ENCODE measurements at regions of chr10 and their contacts with region 1.

Region 1: DNA sequence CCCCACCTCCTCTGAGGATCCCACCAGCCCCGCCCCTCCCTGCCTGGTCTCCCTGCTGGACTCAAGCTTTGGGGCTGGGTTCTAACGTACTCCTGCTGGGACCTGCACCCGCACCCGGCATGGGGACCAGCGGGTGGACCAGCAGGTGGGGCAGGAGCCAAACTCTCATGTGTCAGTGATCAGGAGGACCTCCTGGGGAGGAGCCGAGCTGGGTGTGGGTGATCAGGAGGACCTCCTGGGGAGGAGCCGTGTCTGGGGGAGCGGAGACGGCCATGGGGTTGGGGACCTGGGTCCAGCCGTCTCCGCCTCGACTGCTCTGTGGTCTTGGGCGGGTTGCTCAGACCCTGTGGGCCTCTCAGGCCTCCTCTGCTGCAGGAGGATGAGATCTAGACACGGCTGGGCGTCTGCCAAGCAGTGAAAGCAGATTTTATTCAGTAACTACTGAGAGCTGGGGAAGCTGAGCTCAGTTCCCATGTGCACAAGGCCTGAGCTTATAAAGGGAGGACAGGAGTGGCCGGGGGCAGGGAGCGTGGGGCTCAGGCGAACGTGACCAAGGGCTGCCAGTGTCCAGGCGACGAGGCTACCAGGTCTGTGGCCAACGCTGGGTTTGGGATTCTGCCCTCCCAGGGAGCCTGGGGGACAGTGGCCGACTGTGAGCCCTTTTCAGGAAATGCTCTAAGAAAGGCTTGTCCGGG is 33.6 kb upstream of the UTF1 start:
- DNase-seq: no peak
- ATAC-seq: no peak
- H3K4me3 Mint-ChIP-seq: no peak overlapping the region
- H3K27ac Mint-ChIP-seq: peak overlapping the region; percentile 94
- H3K4me1 Mint-ChIP-seq: no peaks in the 10 kb centered on the region
- H3K27me3 Mint-ChIP-seq: peaks cover 12% of the 10 kb centered on the region
- CTCF ChIP-seq: no peak

Region 2: DNA sequence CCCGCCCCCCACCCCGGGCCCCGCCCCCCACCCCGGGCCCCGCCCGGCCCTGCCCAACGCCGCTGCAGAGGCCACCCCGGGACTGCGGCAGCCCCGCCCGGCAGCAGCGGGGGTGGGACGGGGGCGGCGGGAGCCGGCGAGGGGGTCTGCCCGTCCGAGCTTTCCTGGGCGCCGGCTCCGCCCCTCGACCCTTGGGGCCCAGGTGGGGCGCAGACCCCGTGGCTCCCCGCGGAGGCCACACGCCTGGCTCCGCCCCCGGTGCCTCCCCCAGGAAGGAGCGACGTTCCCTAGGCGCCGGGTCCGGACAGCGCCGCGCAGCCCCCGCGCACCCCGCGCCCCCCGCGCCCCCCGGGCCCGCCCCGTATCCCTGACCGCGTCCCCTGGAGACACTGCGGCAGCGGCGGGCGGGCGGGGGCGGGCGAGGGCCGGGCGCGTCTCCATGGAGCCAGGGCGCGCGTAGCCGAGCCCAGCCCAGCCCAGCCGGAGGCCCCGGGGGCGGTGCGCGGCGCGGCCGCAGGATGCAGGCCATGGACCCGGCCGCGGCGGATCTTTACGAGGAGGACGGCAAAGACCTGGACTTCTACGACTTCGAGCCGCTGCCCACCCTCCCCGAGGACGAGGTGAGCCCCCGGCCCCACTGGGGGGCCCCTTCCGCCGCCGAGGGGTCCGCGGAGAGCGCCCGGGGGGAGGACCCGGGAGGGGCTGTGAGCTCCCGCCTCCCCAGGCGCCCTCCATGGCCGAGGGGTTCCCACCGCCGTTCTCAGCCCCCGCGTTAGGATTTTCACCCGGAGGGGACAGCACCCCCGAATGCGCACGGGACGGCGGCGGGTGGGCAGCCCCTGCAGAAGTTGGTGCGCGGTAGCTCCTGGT is 36.2 kb before region 1 on chr10 and contains the start of gene KNDC1:
- CTCF ChIA-PET with region 1: interaction called, 12 read pairs
- POLR2A ChIA-PET with region 1: no interaction called
- DNase-seq: peak; percentile 51
- ATAC-seq: peak; percentile 45
- H3K4me3 Mint-ChIP-seq: peak within 1 kb of the TSS; percentile 66
- H3K27ac Mint-ChIP-seq: no peak within 1 kb of the TSS
- H3K4me1 Mint-ChIP-seq: peaks cover 20% of the 10 kb centered on the region
- H3K27me3 Mint-ChIP-seq: peaks cover 3% of the 10 kb centered on the region
- CTCF ChIP-seq: no peak
- total RNA-seq, gene KNDC1: 25.7 to 26.8 TPM (median 26.6 TPM) in 3 replicates

Region 3: DNA sequence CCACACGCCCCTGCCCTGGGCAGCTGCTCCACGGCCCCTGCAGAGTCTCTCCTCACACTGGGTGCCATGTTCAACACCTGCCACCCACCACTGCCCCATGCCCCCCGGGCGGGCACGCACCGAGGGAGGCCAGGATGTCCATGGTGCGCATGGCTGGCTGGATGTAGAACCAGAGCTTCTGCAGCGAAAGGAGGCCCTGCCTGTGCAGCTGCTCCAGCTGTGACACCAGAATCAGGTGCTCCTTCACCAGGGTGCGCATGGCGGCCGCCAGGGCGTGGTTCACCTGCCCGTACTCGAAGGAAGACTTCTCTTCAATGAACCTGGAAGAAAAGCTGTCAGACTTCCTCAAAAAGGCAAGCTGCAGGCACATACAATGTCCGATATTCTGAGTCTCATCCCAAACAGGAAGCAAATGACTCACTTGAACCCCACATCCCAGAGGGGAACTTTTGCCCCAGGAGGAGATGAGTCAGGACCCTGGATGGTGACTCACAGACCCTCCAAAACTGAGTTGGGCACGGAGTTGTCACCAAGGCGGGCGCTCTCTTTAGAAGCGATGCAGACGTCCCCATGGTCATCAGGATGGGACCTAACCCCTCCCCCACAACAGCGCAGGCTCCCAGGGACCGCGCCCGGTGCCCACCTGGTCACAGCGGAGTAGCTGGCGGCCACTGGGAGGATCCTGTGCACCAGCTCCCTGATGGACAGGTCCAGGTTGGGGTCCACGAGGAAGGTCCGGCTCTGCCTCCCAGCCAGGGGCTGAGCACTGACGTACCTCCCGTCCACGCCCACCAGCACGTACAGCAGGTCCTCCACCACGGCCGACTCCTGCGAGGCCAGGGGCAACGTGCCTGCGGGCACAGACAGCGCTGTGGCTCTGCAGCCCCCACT is 96.8 kb after region 1 on chr10:
- CTCF ChIA-PET with region 1: no interaction called
- POLR2A ChIA-PET with region 1: no interaction called
- DNase-seq: no peak
- ATAC-seq: no peak
- H3K4me3 Mint-ChIP-seq: no peak overlapping the region
- H3K27ac Mint-ChIP-seq: no peak overlapping the region
- H3K4me1 Mint-ChIP-seq: no peaks in the 10 kb centered on the region
- H3K27me3 Mint-ChIP-seq: no peaks in the 10 kb centered on the region
- CTCF ChIP-seq: no peak

Measured in WTC11 (cell line).